ENCODE measurements at regions of chr15 and their contacts with region 1.

Region 1: DNA sequence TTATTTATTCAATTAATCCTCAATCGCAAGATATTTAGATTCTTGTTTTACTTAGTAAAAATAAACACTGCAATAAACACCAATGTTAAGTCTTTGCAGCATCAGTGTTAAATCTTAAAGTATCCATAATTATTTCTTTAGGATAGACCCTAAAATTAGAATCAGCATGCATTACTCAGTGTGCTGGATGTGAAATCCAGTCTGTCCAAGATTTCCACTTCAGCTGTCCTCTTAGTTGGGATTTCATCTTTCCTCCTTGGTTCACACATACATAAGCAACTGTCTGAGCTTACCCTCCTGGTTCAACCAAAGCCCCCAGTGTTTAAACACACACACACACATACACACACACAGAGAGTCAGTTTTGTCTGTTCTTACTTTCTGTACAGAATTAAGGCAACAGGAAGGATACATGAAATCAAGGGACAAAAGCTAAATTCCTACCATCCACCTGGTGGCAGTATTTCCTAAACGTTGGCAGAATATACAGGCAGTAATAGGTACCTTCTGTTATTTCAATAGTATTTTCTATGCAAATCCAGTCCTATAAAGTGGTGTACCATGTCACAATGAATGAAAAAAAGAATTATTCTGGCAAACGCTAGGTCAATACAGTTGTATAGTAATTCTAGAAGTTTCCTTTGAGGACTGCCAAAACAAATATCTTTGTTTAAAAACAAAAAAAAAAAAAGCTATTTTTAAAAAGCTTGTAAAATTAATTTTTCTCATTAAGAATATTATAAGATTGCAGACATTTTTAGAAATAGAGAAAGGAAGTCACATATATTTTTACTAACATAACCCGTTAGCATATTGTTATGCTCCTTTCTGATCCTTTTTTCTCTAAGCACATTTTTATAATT is 27.3 kb upstream of the DMXL2 start:
- DNase-seq: peak; percentile 37
- H3K4me3 Mint-ChIP-seq: no peak overlapping the region
- H3K27ac Mint-ChIP-seq: no peak overlapping the region
- H3K4me1 Mint-ChIP-seq: no peaks in the 10 kb centered on the region
- H3K27me3 Mint-ChIP-seq: peaks cover 9% of the 10 kb centered on the region

Region 2: GRCh38 chr15:51536965-51537574 is 112.8 kb before region 1 on chr15:
- intact Hi-C with region 1: no loop called
- DNase-seq: no peak
- H3K4me3 Mint-ChIP-seq: no peak overlapping the region
- H3K27ac Mint-ChIP-seq: no peak overlapping the region
- H3K4me1 Mint-ChIP-seq: no peaks in the 10 kb centered on the region
- H3K27me3 Mint-ChIP-seq: peaks cover 2% of the 10 kb centered on the region

Region 3: GRCh38 chr15:51776952-51777574 is 127.2 kb after region 1 on chr15:
- intact Hi-C with region 1: loop called (anchors 1 kb)
- DNase-seq: peak; percentile 53
- H3K4me3 Mint-ChIP-seq: no peak overlapping the region
- H3K27ac Mint-ChIP-seq: no peak overlapping the region
- H3K4me1 Mint-ChIP-seq: peaks cover 7% of the 10 kb centered on the region
- H3K27me3 Mint-ChIP-seq: no peaks in the 10 kb centered on the region

Region 4: GRCh38 chr15:51917493-51917892 is 267.6 kb after region 1 on chr15:
- intact Hi-C with region 1: loop called (anchors 5 kb)
- DNase-seq: no peak
- H3K4me3 Mint-ChIP-seq: no peak overlapping the region
- H3K27ac Mint-ChIP-seq: no peak overlapping the region
- H3K4me1 Mint-ChIP-seq: no peaks in the 10 kb centered on the region
- H3K27me3 Mint-ChIP-seq: no peaks in the 10 kb centered on the region